ENCODE measurements at regions of chr3 and their contacts with region 1.

Region 1: DNA sequence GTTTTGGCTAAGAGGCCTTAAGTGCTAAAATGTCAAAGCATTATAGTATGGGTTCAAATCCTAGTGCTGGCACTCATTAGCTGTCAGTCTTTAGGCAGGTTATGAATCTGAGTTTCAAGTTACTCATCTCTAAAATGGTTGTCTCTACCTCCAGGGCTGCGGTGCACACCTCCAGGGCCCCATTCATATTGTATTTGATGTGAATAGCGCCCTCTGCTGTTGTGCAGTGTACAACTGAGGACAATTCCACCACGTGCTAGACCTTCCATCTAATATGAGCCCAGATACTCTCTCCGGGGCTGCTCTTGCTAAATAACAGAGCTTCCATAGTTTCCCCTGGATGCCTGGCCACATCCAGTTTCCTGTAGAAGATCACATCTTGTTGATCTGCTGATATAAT is 54.3 kb downstream of the OXNAD1 start:
- DNase-seq: no peak
- H3K4me3 ChIP-seq: no peak overlapping the region
- H3K27ac ChIP-seq: no peak overlapping the region
- H3K4me1 ChIP-seq: no peaks in the 10 kb centered on the region
- H3K27me3 ChIP-seq: no peaks in the 10 kb centered on the region
- CTCF ChIP-seq: peak; percentile 44 to 73 (median 62)
- EP300 ChIP-seq: no peak
- POLR2A ChIP-seq: no peak
- RAD21 ChIP-seq: peak; percentile 58 to 67

Region 2: GRCh38 chr3:16300881-16301359 is 18.4 kb before region 1 on chr3:
- CTCF ChIA-PET with region 1: interaction called, 106 read pairs
- POLR2A ChIA-PET with region 1: interaction called, 4 read pairs
- DNase-seq: no peak
- H3K4me3 ChIP-seq: peak overlapping the region in 1 of 4 experiments; percentile 35; a peak in 1 of 8 replicates
- H3K27ac ChIP-seq: peak overlapping the region; percentile 17; the same call in 1 of the 2 replicates
- H3K4me1 ChIP-seq: peaks cover 7 to 29% (median 21%) of the 10 kb centered on the region in 4 experiments; a peak in 6 of 7 replicates
- H3K27me3 ChIP-seq: no peaks in the 10 kb centered on the region
- CTCF ChIP-seq: no peak
- EP300 ChIP-seq: no peak
- POLR2A ChIP-seq: no peak
- RAD21 ChIP-seq: no peak

Region 3: DNA sequence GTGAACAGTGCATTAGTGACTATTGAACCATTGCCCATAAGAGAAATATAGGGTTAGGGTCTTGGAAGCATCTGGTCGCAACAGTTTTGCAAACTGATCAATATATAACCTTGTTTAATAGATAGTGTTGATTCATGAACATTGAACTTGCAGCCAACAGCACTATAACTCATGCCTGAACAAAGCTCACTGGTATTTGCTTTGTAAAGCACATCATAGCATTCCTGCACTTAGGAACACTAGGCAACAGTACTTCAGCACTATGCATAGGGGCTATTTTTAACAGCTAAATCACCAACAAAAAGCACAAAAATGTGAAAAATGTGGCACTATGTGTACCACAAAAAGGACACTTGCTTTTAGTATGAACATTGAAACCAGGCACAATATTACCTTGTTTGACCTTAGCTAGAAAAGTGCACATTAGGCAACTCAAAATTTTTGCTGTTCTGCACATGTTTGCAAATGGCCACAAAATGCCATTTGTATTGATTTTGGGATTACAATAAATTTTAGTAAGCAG is 13.7 kb after region 1 on chr3:
- CTCF ChIA-PET with region 1: interaction called, 41 read pairs
- POLR2A ChIA-PET with region 1: interaction called, 3 read pairs
- DNase-seq: no peak
- H3K4me3 ChIP-seq: no peak overlapping the region
- H3K27ac ChIP-seq: no peak overlapping the region
- H3K4me1 ChIP-seq: peaks cover 0 to 9% (median 3%) of the 10 kb centered on the region in 4 experiments; a peak in 4 of 7 replicates
- H3K27me3 ChIP-seq: no peaks in the 10 kb centered on the region
- CTCF ChIP-seq: no peak
- EP300 ChIP-seq: no peak
- POLR2A ChIP-seq: no peak
- RAD21 ChIP-seq: no peak

Region 4: GRCh38 chr3:16550676-16551341 is 231.5 kb after region 1 on chr3:
- CTCF ChIA-PET with region 1: interaction called, 11 read pairs
- POLR2A ChIA-PET with region 1: no interaction called
- DNase-seq: peak; percentile 36 to 87
- H3K4me3 ChIP-seq: peak overlapping the region in 1 of 4 experiments; percentile 27; a peak in 2 of 8 replicates
- H3K27ac ChIP-seq: no peak overlapping the region
- H3K4me1 ChIP-seq: peaks cover 0 to 4% (median 2%) of the 10 kb centered on the region in 4 experiments; a peak in 4 of 7 replicates
- H3K27me3 ChIP-seq: no peaks in the 10 kb centered on the region
- CTCF ChIP-seq: peak; percentile 73 to 94 (median 90)
- EP300 ChIP-seq: 0 out of 3 replicates have a peak, but pooled peaks of 1 of the 2 experiments have one; percentile 13
- POLR2A ChIP-seq: peak in 1 of 2 experiments; percentile 47; a peak in 1 of 3 replicates
- RAD21 ChIP-seq: peak; percentile 98 to 99

Measured in H1 (cell line).